ENCODE measurements at regions of chr1 and their contacts with region 1.

Region 1: GRCh38 chr1:158007667-158008386 is 14.4 kb downstream of the KIRREL1 start:
- DNase-seq: no peak
- H3K4me3 Mint-ChIP-seq: no peak overlapping the region
- H3K27ac Mint-ChIP-seq: no peak overlapping the region
- H3K4me1 Mint-ChIP-seq: no peaks in the 10 kb centered on the region
- H3K27me3 Mint-ChIP-seq: no peaks in the 10 kb centered on the region

Region 2: DNA sequence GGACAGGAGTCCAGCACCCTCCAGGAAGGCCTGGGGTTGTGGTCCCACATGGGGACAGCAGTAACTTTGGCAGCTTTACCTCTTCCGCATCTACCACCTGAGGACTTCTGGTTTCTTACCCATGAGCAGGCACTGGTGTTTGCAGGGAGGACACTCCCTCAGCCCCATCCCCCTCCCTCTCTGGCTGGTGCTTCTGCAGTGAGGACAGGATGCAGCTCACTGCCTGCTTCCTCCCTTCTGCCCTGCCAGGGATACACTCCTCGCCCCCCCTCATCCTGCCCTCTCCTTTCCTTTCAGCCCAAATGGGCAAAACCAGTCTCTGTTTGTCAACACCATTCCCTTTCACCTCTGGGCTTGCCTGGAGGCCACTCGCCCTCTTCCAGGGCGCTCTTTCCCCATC is 48.0 kb after region 1 on chr1:
- intact Hi-C with region 1: loop called (anchors 5 kb)
- DNase-seq: no peak
- H3K4me3 Mint-ChIP-seq: no peak overlapping the region
- H3K27ac Mint-ChIP-seq: no peak overlapping the region
- H3K4me1 Mint-ChIP-seq: no peaks in the 10 kb centered on the region
- H3K27me3 Mint-ChIP-seq: peaks cover 5% of the 10 kb centered on the region

Measured in activated CD4-positive, alpha-beta T cell treated with anti-CD3 and anti-CD28 coated beads, Interleukin-2, amount 10 ng/mL, durations not matched to agents 24 days and 14 days (primary cell).